Transverse colon (tissue), 4 donors: ENCODE measurements at regions of chr12 and their contacts with region 1.

Region 1: DNA sequence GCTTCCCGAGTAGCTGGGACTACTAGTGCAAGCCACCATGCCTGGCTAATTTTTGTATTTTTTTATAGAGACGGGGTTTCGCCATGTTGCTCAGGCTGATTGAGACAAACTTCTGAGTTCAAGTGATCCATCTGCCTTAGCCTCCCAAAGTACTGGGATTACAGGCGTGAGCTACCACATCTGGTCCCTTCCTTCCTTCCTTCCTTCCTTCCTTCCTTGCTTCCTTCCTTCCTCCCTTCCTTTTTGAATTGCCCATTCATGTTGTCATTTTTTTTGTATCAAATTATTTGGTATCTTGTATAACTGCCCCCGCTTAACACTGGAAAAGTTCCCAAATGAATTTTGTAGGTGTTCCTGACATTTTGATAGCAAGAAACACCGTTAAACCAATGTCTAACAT is 11.7 kb downstream of the RAD9B start:
- DNase-seq: no peak
- H3K4me3 ChIP-seq: no peak overlapping the region
- H3K27ac ChIP-seq: no peak overlapping the region
- H3K4me1 ChIP-seq: peaks cover 0 to 7% (median 3%) of the 10 kb centered on the region in 4 donors
- H3K27me3 ChIP-seq: no peaks in the 10 kb centered on the region
- CTCF ChIP-seq: no peak
- EP300 ChIP-seq: no peak
- POLR2A ChIP-seq: no peak

Region 2: GRCh38 chr12:110431957-110432587 is 81.8 kb before region 1 on chr12:
- in situ Hi-C with region 1: no loop called
- intact Hi-C with region 1: no loop called
- DNase-seq: no peak
- H3K4me3 ChIP-seq: peak overlapping the region in 3 of 4 donors; percentile 32 to 69 (median 56)
- H3K27ac ChIP-seq: peak overlapping the region; percentile 55 to 77 (median 72)
- H3K4me1 ChIP-seq: peaks cover 0 to 4% (median 2%) of the 10 kb centered on the region in 4 donors
- H3K27me3 ChIP-seq: no peaks in the 10 kb centered on the region
- CTCF ChIP-seq: no peak
- EP300 ChIP-seq: no peak
- POLR2A ChIP-seq: no peak

Region 3: DNA sequence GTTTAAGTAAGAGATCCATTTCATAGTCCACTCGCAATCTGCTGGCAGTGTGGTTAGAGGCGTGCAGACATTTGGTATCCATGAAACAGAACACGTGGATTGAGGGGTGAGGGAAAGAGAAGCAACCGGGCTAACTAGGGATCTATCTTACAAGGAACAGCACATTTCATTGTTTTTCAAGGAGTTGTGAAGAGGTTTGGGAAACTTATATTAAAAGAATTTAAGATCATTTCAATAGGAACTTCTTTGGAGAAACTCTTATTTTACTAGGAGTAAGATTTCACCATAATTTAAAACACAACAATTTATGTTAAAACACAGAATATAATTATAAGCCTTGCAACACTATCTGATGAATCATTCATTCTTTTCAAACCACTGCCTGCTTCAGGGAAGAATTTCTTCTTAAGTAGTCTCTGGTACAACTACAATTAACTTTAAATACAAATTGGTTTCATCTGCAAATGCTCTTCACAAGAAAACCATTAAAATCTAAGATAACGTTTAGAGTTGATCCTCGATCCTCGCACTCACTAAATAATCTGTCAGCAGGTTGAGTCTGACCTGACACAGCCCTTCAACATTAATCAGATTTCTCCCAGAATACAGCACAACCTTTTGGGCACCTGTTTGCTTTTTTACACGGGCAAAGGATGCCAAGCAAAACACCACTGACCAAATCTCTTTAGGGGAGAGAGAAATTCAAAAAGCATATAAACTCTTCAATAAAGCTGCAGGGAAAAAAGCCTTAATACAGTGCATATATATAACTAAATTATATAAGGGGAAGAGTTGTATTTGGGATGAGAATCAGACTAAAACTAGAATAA is 42.0 kb after region 1 on chr12:
- in situ Hi-C with region 1: no loop called
- intact Hi-C with region 1: loop called (anchors 2 kb)
- DNase-seq: no peak
- H3K4me3 ChIP-seq: no peak overlapping the region
- H3K27ac ChIP-seq: peak overlapping the region in 3 of 4 donors; percentile 15 to 38 (median 27)
- H3K4me1 ChIP-seq: peaks cover 13 to 57% (median 25%) of the 10 kb centered on the region in 4 donors
- H3K27me3 ChIP-seq: no peaks in the 10 kb centered on the region
- CTCF ChIP-seq: no peak
- EP300 ChIP-seq: no peak
- POLR2A ChIP-seq: no peak

Region 4: DNA sequence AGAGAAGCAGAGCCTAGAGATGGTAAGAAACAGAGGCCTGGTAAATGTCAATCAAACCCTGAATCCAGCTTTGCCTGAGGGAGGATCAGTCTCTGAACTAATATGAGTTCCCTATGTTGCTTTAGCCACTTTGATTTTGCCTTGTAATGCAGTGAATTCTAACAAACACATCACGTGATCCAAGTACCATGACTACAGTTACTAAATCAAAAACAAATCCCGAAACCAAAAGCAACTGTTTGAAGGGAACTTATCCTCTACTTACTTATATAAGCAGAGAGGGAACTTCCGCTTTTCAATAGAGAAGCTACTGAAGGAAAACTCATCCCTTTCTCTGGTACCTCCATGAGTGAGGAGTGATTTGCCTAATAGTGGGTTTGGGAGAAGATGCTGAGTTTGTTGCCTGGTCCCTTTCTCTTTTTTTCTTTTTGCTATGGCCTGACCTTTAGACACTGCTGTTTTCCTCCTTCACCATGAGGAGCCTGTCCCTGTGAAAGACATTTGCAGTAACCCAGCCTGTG is 77.0 kb after region 1 on chr12:
- in situ Hi-C with region 1: no loop called
- intact Hi-C with region 1: loop called (anchors 5 kb)
- DNase-seq: no peak
- H3K4me3 ChIP-seq: no peak overlapping the region
- H3K27ac ChIP-seq: peak overlapping the region; percentile 75 to 88 (median 81)
- H3K4me1 ChIP-seq: peaks cover 10 to 22% (median 17%) of the 10 kb centered on the region in 4 donors
- H3K27me3 ChIP-seq: no peaks in the 10 kb centered on the region
- CTCF ChIP-seq: no peak
- EP300 ChIP-seq: no peak
- POLR2A ChIP-seq: no peak

Region 5: GRCh38 chr12:110600254-110600653 is 86.4 kb after region 1 on chr12:
- in situ Hi-C with region 1: loop called (anchors 5 to 10 kb)
- intact Hi-C with region 1: loop called (anchors 5 kb)
- DNase-seq: no peak
- H3K4me3 ChIP-seq: no peak overlapping the region
- H3K27ac ChIP-seq: no peak overlapping the region
- H3K4me1 ChIP-seq: no peaks in the 10 kb centered on the region
- H3K27me3 ChIP-seq: no peaks in the 10 kb centered on the region
- CTCF ChIP-seq: peak; percentile 26 to 61 (median 41)
- EP300 ChIP-seq: no peak
- POLR2A ChIP-seq: no peak

Region 6: DNA sequence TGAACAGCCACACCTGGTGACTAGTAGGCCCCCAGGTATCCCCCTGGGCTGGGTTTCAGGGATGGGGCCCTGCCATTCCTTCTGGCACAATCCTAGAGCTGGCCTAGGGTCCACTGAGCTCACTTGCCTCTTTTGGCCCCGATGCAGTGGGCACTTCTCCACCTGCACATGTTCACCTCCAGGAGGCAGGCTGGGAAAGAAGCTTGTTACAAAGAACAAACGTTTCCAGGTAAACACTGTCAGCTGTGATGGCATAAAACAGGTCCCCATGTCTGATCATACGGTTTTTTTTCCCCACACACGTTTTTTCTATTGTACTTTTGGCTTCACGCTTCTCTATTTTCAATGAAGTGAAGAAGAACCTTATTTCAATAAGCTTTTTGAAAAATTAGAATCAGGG is 190.9 kb after region 1 on chr12:
- in situ Hi-C with region 1: loop called in 2 of 4 experiments (anchors 10 to 25 kb)
- intact Hi-C with region 1: no loop called
- DNase-seq: peak; percentile 44
- H3K4me3 ChIP-seq: no peak overlapping the region
- H3K27ac ChIP-seq: no peak overlapping the region
- H3K4me1 ChIP-seq: no peaks in the 10 kb centered on the region
- H3K27me3 ChIP-seq: no peaks in the 10 kb centered on the region
- CTCF ChIP-seq: peak; percentile 19 to 61 (median 41)
- EP300 ChIP-seq: no peak
- POLR2A ChIP-seq: no peak